MCF 10A (cell line): ENCODE measurements at regions of chr5 and their contacts with region 1.

Region 1: DNA sequence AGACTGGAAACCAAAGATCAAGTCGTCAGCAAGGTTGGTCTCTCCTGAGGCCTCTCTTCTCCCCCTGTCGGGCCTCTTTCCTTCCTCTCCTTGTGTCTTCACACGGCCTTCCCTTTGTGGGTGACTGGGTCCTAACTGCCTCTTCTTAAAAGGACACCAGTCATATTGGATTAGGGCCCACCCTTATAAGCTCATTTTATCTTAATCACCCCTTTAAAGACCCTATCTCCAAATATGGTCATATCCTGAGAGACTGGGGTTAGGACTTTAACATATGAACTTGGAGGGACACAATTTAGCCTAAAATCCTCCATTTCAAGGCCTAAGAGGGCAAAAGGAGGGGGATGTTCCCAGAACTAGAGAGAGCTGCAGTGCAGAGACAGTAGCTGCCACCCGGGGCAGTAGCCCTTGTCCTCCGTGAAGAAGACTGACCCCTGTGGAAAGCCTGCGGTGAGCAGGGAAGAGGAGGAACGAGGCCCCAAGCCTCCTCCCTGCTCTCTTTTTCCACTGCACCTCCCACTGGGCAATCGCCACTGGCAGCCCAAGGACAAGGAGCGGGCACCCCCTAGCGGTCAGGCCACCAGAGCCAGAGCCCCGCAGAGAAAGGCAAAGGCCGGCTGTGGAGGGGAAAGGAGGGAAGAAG is 34.9 kb downstream of the CFAP90 start:
- DNase-seq: peak; percentile 75
- H3K4me3 Mint-ChIP-seq: no peak overlapping the region
- H3K27ac Mint-ChIP-seq: no peak overlapping the region
- H3K4me1 Mint-ChIP-seq: no peaks in the 10 kb centered on the region
- H3K27me3 Mint-ChIP-seq: peaks cover 61% of the 10 kb centered on the region
- CTCF ChIP-seq: peak; percentile 90

Region 2: GRCh38 chr5:6765612-6766525 is 1050.1 kb before region 1 on chr5:
- CTCF ChIA-PET with region 1: interaction called, 6 read pairs
- POLR2A ChIA-PET with region 1: no interaction called
- intact Hi-C with region 1: loop called (anchors 5 kb)
- DNase-seq: peak; percentile 89
- H3K4me3 Mint-ChIP-seq: peak overlapping the region; percentile 65
- H3K27ac Mint-ChIP-seq: no peak overlapping the region
- H3K4me1 Mint-ChIP-seq: peaks cover 23% of the 10 kb centered on the region
- H3K27me3 Mint-ChIP-seq: no peaks in the 10 kb centered on the region
- CTCF ChIP-seq: peak; percentile 91

Region 3: DNA sequence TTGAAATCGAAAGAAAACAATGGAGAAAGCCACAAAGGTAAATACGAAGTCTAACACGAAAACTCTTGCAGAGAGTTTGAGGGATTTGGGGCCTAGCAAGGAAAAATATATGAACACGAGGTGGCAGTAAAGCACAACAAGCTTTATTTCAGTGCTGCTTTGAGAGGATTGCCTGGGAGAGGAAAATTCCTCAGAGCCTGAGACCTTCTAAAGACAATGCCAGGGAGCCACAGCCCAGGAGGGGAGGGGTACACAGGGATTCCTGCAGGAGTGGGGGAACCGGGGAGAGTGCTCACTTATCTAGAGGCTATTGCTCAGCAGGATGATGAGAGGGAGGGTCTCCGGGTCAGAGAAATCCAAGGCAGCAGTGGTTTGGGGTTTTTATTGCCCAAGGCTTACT is 555.0 kb before region 1 on chr5:
- CTCF ChIA-PET with region 1: interaction called, 28 read pairs
- POLR2A ChIA-PET with region 1: no interaction called
- intact Hi-C with region 1: loop called (anchors 1 kb)
- DNase-seq: peak; percentile 25
- H3K4me3 Mint-ChIP-seq: no peak overlapping the region
- H3K27ac Mint-ChIP-seq: no peak overlapping the region
- H3K4me1 Mint-ChIP-seq: no peaks in the 10 kb centered on the region
- H3K27me3 Mint-ChIP-seq: peaks cover 2% of the 10 kb centered on the region
- CTCF ChIP-seq: peak; percentile 45

Region 4: DNA sequence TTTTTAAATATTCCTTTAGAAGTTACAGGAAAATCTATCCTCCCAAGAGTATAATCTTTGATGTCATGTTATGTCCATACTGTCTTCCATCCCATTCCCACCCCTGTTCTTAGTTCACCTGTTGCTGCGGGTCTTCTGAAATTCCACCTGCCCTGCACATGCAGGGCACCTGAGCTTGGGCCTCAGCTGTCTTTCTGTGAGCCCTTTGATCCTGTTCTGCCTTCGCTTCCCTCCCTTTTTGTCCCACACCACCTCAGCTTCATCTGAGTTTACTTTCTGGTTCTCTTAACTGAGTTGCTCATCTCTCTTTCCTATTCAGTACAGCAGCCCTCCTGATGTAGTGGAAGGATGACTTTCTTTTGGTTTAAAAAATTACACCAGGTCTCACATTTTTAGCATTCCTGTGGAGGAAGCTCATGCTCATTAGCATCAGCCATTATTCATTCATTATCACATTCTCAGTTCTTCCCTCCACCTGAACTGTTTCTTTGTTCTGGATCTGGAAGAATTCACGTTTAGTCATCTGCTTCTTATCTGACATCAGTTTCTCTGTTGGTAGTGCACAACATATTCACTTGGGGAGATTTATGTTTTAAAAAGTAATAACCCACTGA is 209.1 kb before region 1 on chr5:
- CTCF ChIA-PET with region 1: no interaction called
- POLR2A ChIA-PET with region 1: no interaction called
- intact Hi-C with region 1: no loop called
- DNase-seq: no peak
- H3K4me3 Mint-ChIP-seq: no peak overlapping the region
- H3K27ac Mint-ChIP-seq: no peak overlapping the region
- H3K4me1 Mint-ChIP-seq: no peaks in the 10 kb centered on the region
- H3K27me3 Mint-ChIP-seq: peaks cover 29% of the 10 kb centered on the region
- CTCF ChIP-seq: no peak

Region 5: GRCh38 chr5:7805379-7805778 is 10.6 kb before region 1 on chr5:
- CTCF ChIA-PET with region 1: interaction called, 17 read pairs
- POLR2A ChIA-PET with region 1: no interaction called
- intact Hi-C with region 1: no loop called
- DNase-seq: peak; percentile 13
- H3K4me3 Mint-ChIP-seq: no peak overlapping the region
- H3K27ac Mint-ChIP-seq: no peak overlapping the region
- H3K4me1 Mint-ChIP-seq: no peaks in the 10 kb centered on the region
- H3K27me3 Mint-ChIP-seq: peaks cover 30% of the 10 kb centered on the region
- CTCF ChIP-seq: no peak

Region 6: DNA sequence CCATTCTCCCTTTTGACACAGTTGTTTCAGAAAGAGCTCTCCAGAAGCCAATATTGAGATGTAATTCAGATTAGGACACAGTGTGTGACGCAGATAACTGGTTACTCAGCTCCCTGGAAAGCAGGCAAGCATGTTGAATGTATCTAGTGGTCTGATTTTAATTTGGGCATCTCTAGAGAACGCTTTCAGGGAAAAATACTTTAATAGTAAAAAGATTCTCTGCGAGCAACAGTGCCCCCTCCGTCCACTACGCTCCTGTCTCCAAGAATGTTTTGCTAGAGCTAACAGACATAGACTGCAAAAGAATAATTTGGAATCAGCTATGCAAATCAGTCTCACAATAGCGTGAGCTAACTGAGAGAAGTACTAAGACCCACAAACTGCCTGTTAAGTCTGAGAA is 11.6 kb after region 1 on chr5:
- CTCF ChIA-PET with region 1: interaction called, 16 read pairs
- POLR2A ChIA-PET with region 1: interaction called, 3 read pairs
- intact Hi-C with region 1: no loop called
- DNase-seq: no peak
- H3K4me3 Mint-ChIP-seq: no peak overlapping the region
- H3K27ac Mint-ChIP-seq: no peak overlapping the region
- H3K4me1 Mint-ChIP-seq: no peaks in the 10 kb centered on the region
- H3K27me3 Mint-ChIP-seq: peaks cover 35% of the 10 kb centered on the region
- CTCF ChIP-seq: no peak

Region 7: GRCh38 chr5:7837403-7837802 is 21.4 kb after region 1 on chr5:
- CTCF ChIA-PET with region 1: interaction called, 16 read pairs
- POLR2A ChIA-PET with region 1: interaction called, 3 read pairs
- intact Hi-C with region 1: no loop called
- DNase-seq: no peak
- H3K4me3 Mint-ChIP-seq: no peak overlapping the region
- H3K27ac Mint-ChIP-seq: no peak overlapping the region
- H3K4me1 Mint-ChIP-seq: no peaks in the 10 kb centered on the region
- H3K27me3 Mint-ChIP-seq: no peaks in the 10 kb centered on the region
- CTCF ChIP-seq: no peak

Region 8: DNA sequence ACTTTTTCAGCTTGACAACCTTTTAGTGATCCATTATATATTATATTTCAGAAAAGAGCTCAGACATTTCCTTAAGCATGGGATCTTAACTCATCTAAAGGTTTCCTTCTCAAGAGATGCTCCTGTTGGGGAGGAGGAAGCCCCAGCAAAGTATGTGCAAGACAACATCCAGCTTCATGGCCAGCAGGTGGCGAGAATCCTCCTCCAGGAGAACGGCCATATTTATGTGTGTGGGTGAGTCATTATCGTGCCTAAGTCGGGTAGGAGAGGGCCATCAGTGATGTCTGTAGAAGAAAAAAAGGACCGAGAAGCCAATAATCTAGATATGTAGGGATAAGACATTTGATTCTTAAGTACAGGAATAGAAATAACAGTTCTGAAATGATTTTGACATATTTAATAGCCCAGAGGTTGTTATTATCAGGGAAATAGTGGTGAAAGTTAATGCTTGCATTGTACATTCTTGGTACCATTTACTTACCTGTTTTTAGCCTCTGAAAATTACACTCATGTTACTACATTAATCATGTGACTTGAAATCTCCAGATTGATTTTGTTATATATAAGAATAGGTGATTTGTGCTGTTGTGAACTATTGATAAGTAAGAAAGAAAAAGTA is 81.1 kb after region 1 on chr5:
- CTCF ChIA-PET with region 1: no interaction called
- POLR2A ChIA-PET with region 1: no interaction called
- intact Hi-C with region 1: no loop called
- DNase-seq: peak; percentile 74
- H3K4me3 Mint-ChIP-seq: no peak overlapping the region
- H3K27ac Mint-ChIP-seq: no peak overlapping the region
- H3K4me1 Mint-ChIP-seq: no peaks in the 10 kb centered on the region
- H3K27me3 Mint-ChIP-seq: no peaks in the 10 kb centered on the region
- CTCF ChIP-seq: peak; percentile 45

Region 9: GRCh38 chr5:7927466-7928375 is 111.7 kb after region 1 on chr5:
- CTCF ChIA-PET with region 1: no interaction called
- POLR2A ChIA-PET with region 1: no interaction called
- intact Hi-C with region 1: no loop called
- DNase-seq: peak; percentile 65
- H3K4me3 Mint-ChIP-seq: no peak overlapping the region
- H3K27ac Mint-ChIP-seq: no peak overlapping the region
- H3K4me1 Mint-ChIP-seq: no peaks in the 10 kb centered on the region
- H3K27me3 Mint-ChIP-seq: peaks cover 10% of the 10 kb centered on the region
- CTCF ChIP-seq: peak; percentile 63